Ovary (tissue), 10 donors: ENCODE measurements at regions of chr11 and their contacts with region 1.

Region 1: DNA sequence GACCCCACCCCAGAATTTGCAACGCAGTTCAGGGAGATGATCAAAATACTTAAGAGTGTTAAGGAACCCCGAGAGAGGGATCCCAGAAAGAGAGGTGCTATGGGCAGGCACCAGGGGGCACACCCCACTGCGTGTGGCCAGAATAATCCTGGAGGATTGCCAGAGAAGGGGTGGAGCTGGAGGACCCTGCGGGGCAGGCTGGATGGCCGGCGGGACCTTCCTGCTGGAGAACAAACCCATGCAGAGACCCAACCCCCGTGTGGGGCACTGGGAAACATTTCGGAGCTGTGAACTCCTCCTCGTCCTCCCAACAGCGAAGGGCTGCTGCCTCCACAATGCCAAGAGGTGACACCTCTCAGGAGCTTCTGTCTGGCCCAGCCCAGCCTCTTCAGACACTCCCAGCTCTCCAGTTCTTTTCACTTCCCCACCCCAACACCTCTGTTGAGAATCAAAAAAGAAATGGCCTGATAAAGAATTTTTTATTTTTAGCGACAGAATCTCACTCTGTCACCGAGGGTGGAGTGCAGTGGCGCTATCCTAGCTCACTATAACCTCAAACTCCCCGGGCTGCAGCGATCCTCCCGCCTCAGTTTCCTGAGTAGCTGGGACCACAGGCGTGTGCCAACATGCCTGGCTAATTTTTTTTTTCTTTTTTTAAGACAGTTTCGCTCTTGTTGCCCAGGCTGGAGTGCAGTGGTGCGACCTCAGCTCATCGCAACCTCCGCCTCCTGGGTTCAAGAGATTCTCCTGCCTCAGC is 25.6 kb downstream of the RHOD start:
- DNase-seq: peak in 3 of 5 donors; percentile 20 to 44 (median 32)
- H3K4me3 ChIP-seq: no peak overlapping the region
- H3K27ac ChIP-seq: no peak overlapping the region
- H3K4me1 ChIP-seq: no peaks in the 10 kb centered on the region
- H3K27me3 ChIP-seq: no peaks in the 10 kb centered on the region
- CTCF ChIP-seq: no peak
- EP300 ChIP-seq: no peak
- POLR2A ChIP-seq: no peak

Region 2: GRCh38 chr11:67178878-67179277 is 96.7 kb after region 1 on chr11:
- intact Hi-C with region 1: loop called in 1 of 4 experiments (anchors 10 kb)
- DNase-seq: no peak
- H3K4me3 ChIP-seq: no peak overlapping the region
- H3K27ac ChIP-seq: no peak overlapping the region
- H3K4me1 ChIP-seq: peaks cover 7% of the 10 kb centered on the region
- H3K27me3 ChIP-seq: no peaks in the 10 kb centered on the region
- CTCF ChIP-seq: no peak
- EP300 ChIP-seq: no peak
- POLR2A ChIP-seq: no peak